ENCODE measurements at regions of chr19 and their contacts with region 1.

Region 1: DNA sequence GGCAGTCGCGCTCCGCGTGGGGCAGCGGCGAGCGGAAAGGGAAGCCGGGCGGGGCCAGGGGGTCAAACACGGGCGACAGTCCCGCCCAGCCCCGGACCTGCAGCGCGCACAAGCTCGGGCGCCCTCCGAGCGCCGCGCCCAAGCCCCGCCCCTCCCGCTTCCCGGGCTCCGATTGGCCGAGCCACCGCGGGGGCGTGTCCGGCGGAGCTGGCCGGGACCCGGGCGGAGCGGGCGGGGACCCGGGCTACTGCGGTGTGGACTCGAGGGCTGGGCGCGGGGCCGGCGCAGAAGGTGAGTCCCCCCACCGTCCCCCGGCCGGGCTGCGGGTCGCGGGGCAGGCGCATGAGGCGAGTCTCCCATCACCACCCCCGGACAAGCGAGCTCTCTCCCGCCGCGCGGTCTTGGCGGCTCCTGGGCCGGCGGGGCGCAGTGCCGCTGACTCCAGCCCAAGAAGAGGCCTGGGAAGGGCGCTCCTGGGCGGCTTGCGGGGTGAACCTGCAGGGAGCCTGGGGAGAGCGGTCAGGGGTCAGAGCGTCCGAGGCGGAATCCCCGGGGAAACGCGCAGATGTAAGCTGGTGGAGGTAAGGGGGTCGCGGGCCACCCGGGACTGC is at the start of gene PLEKHF1:
- DNase-seq: peak; percentile 88 to 93
- ATAC-seq: peak; percentile 66 to 67
- H3K4me3 ChIP-seq: peak within 1 kb of the TSS; percentile 94 to 99 (median 97)
- H3K27ac ChIP-seq: peak within 1 kb of the TSS; percentile 94 to 100 (median 98)
- H3K4me1 ChIP-seq: peaks cover 56 to 66% of the 10 kb centered on the region in 2 donors
- H3K27me3 ChIP-seq: no peaks in the 10 kb centered on the region
- CTCF ChIP-seq: peak in 1 of 5 experiments; percentile 17
- POLR2A ChIP-seq: peak; percentile 97 to 99
- total RNA-seq, gene PLEKHF1: 69.1 to 164 (median 135) TPM

Region 2: DNA sequence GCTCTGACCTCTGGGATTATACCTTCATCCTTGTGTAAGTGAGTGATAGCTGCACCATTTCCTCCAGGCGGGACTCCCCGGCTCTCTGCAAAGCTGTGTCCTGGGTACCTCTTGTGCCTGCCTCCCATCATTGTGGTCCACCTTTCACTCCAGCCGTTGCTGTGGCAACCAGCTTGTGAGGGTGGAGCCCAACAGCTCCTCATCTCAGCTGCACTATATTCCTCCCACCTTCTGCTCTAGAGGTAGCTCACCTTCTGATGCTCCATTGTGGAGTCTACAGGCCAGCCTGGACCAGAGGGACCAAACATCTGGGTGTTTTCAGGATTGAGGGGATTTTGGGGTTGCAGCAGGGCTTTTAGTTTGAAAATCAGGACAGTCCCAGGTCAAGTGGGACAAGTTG is 1160.6 kb before region 1 on chr19:
- in situ Hi-C with region 1: no loop called
- intact Hi-C with region 1: loop called (anchors 5 kb)
- DNase-seq: no peak
- ATAC-seq: no peak
- H3K4me3 ChIP-seq: no peak overlapping the region
- H3K27ac ChIP-seq: no peak overlapping the region
- H3K4me1 ChIP-seq: peaks cover 9 to 18% of the 10 kb centered on the region in 2 donors
- H3K27me3 ChIP-seq: no peaks in the 10 kb centered on the region
- CTCF ChIP-seq: no peak
- POLR2A ChIP-seq: no peak

Region 3: DNA sequence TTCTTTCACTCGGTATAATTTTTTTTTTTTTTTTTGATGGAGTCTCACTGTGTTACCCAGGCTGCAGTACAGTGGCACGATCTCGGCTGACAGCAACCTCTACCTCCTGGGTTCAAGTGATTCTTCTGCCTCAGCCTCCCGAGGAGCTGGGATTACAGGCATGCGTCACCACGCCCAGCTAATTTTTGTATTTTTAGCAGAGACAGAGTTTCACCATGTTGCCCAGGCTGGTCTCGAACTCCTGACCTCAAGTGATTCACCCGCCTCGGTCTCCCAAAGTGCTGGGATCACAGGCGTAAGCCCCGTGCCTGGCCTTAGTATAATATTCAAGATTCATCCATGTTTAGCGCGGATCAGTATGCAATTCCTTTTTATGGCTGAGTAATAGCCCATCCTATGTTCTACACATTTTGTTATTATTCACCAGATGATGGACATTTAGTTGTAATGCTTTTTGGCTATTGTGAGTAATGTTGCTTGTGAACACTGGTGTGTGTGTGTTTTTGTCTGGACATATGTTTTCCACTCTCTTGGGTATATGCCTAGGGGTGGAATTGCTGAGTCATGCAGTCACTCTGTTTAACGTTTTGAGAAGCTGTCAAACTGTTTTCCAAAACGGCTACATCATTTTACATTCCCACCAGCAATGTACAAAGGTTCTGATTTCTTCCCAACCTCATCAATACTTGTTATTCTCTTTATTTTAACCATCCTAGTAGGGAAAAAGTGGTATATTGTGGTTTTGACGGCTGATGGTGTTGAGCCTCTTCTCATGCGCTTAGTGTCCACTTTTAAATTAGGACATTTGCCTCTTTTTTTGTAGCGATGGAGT is 22.8 kb after region 1 on chr19:
- in situ Hi-C with region 1: no loop called
- intact Hi-C with region 1: loop called (anchors 1 kb)
- DNase-seq: peak in 1 of 2 donors; percentile 56
- ATAC-seq: peak; percentile 11 to 13
- H3K4me3 ChIP-seq: no peak overlapping the region
- H3K27ac ChIP-seq: peak overlapping the region; percentile 94 to 100 (median 98)
- H3K4me1 ChIP-seq: peaks cover 38 to 46% of the 10 kb centered on the region in 2 donors
- H3K27me3 ChIP-seq: no peaks in the 10 kb centered on the region
- CTCF ChIP-seq: no peak
- POLR2A ChIP-seq: no peak

Region 4: DNA sequence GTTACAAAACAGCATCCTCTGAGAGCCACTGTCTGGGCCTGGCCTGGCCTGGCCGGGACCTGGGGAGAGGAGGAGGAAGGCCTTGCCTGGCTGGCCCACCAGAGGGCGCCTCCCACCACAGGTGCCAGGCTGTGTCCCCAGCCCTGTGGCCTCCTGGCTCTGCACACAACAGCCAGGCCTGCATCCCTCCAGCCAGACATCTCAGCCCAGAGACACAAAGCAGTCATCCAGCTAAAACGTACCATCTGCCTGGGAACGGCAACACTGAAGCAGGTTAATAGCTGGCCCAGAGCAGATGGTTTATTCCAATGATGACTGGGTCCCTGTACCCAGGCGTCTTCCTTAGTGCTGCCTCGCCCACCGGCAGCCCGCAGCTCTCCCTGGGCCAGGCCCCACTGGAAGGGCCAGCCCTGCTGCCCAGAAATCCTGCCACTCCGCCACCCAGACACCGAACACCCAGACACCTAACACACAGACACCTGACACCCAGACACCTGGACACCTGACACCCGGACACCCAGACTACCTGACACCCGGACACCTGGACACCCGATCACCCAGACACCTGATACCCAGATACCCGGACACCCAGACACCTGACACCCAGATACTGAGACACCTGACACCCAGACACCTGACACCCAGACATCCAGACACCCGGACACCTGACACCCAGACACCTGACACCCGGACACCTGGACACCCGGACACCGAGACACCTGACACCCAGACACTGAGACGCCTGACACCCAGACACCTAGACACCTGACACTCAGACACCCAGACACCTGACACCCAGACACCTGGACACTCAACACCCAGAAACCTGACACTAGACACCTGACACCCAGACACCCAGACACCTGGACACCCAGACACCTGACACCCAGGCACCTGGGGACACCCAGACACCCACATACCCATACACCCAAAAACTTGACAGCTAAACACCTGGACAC is 29.6 kb after region 1 on chr19:
- in situ Hi-C with region 1: no loop called
- intact Hi-C with region 1: loop called (anchors 1 kb)
- DNase-seq: peak; percentile 83 to 94
- ATAC-seq: peak; percentile 79 to 82
- H3K4me3 ChIP-seq: no peak overlapping the region
- H3K27ac ChIP-seq: peak overlapping the region; percentile 48 to 78 (median 68)
- H3K4me1 ChIP-seq: peaks cover 13 to 26% of the 10 kb centered on the region in 2 donors
- H3K27me3 ChIP-seq: no peaks in the 10 kb centered on the region
- CTCF ChIP-seq: peak; percentile 92 to 96 (median 92)
- POLR2A ChIP-seq: no peak

Region 5: GRCh38 chr19:29714953-29715700 is 49.8 kb after region 1 on chr19 and contains the start of gene C19orf12:
- in situ Hi-C with region 1: loop called in 2 of 4 experiments (anchors 10 kb)
- intact Hi-C with region 1: loop called (anchors 1 kb)
- DNase-seq: peak in 1 of 2 donors; percentile 54
- ATAC-seq: peak; percentile 82 to 86
- H3K4me3 ChIP-seq: peak within 1 kb of the TSS; percentile 80 to 99 (median 86)
- H3K27ac ChIP-seq: peak within 1 kb of the TSS; percentile 94 to 98 (median 94)
- H3K4me1 ChIP-seq: peaks cover 24 to 26% of the 10 kb centered on the region in 2 donors
- H3K27me3 ChIP-seq: no peaks in the 10 kb centered on the region
- CTCF ChIP-seq: peak in 2 of 5 experiments; percentile 24 to 28
- POLR2A ChIP-seq: peak; percentile 92 to 94
- total RNA-seq, gene C19orf12: 54.4 to 142 (median 69.8) TPM

Measured in gastrocnemius medialis (tissue), 4 donors.